A673 (cell line): ENCODE measurements at regions of chr7 and their contacts with region 1.

Region 1: GRCh38 chr7:15643000-15643705 is 43.3 kb downstream of the MEOX2 start:
- DNase-seq: no peak
- H3K4me3 ChIP-seq: no peak overlapping the region
- H3K27ac ChIP-seq: no peak overlapping the region
- H3K4me1 ChIP-seq: peaks cover 21% of the 10 kb centered on the region
- H3K27me3 ChIP-seq: no peaks in the 10 kb centered on the region
- CTCF ChIP-seq: no peak

Region 2: GRCh38 chr7:15821484-15822427 is 178.6 kb after region 1 on chr7:
- CTCF ChIA-PET with region 1: no interaction called
- POLR2A ChIA-PET with region 1: no interaction called
- intact Hi-C with region 1: loop called (anchors 10 kb)
- DNase-seq: peak; percentile 54
- H3K4me3 ChIP-seq: no peak overlapping the region
- H3K27ac ChIP-seq: no peak overlapping the region
- H3K4me1 ChIP-seq: peaks cover 7% of the 10 kb centered on the region
- H3K27me3 ChIP-seq: no peaks in the 10 kb centered on the region
- CTCF ChIP-seq: no peak